Activated T-helper 1 cell treated with anti-CD3 and anti-CD28 coated beads, Interleukin-12 subunit alpha, Interleukin-12 subunit beta, Interleukin-2, Interleukin-4 antibody, amounts not matched to agents 30 ng/mL and 10 ng/mL and 1 ng/mL, durations not matched to agents 14 hours and 24 hours and 36 hours (primary cell): ENCODE measurements at regions of chr17 and their contacts with region 1.

Region 1: GRCh38 chr17:76384222-76384986 is at the start of gene SPHK1:
- DNase-seq: peak; percentile 72
- H3K4me3 Mint-ChIP-seq: peak within 1 kb of the TSS; percentile 86
- H3K27ac Mint-ChIP-seq: peak within 1 kb of the TSS; percentile 91
- H3K4me1 Mint-ChIP-seq: peaks cover 5% of the 10 kb centered on the region
- H3K27me3 Mint-ChIP-seq: peaks cover 6% of the 10 kb centered on the region
- total RNA-seq, gene SPHK1: 16.5 and 17.8 TPM in 2 replicates

Region 2: GRCh38 chr17:75909812-75910274 is 474.6 kb before region 1 on chr17:
- intact Hi-C with region 1: no loop called
- DNase-seq: no peak
- H3K4me3 Mint-ChIP-seq: no peak overlapping the region
- H3K27ac Mint-ChIP-seq: no peak overlapping the region
- H3K4me1 Mint-ChIP-seq: peaks cover 8% of the 10 kb centered on the region
- H3K27me3 Mint-ChIP-seq: no peaks in the 10 kb centered on the region

Region 3: GRCh38 chr17:76103274-76104139 is 280.9 kb before region 1 on chr17 and contains the start of gene EXOC7:
- intact Hi-C with region 1: loop called (anchors 10 kb)
- DNase-seq: peak; percentile 93
- H3K4me3 Mint-ChIP-seq: peak within 1 kb of the TSS; percentile 96
- H3K27ac Mint-ChIP-seq: peak within 1 kb of the TSS; percentile 93
- H3K4me1 Mint-ChIP-seq: peaks cover 15% of the 10 kb centered on the region
- H3K27me3 Mint-ChIP-seq: peaks cover under 1% of the 10 kb centered on the region
- total RNA-seq, gene EXOC7: 108 and 116 TPM in 2 replicates

Region 4: GRCh38 chr17:76302606-76303005 is 81.8 kb before region 1 on chr17:
- intact Hi-C with region 1: loop called (anchors 1 kb)
- DNase-seq: no peak
- H3K4me3 Mint-ChIP-seq: no peak overlapping the region
- H3K27ac Mint-ChIP-seq: no peak overlapping the region
- H3K4me1 Mint-ChIP-seq: peaks cover 5% of the 10 kb centered on the region
- H3K27me3 Mint-ChIP-seq: no peaks in the 10 kb centered on the region

Region 5: GRCh38 chr17:76337413-76337777 is 47.0 kb before region 1 on chr17:
- intact Hi-C with region 1: no loop called
- DNase-seq: no peak
- H3K4me3 Mint-ChIP-seq: no peak overlapping the region
- H3K27ac Mint-ChIP-seq: no peak overlapping the region
- H3K4me1 Mint-ChIP-seq: peaks cover 5% of the 10 kb centered on the region
- H3K27me3 Mint-ChIP-seq: no peaks in the 10 kb centered on the region

Region 6: DNA sequence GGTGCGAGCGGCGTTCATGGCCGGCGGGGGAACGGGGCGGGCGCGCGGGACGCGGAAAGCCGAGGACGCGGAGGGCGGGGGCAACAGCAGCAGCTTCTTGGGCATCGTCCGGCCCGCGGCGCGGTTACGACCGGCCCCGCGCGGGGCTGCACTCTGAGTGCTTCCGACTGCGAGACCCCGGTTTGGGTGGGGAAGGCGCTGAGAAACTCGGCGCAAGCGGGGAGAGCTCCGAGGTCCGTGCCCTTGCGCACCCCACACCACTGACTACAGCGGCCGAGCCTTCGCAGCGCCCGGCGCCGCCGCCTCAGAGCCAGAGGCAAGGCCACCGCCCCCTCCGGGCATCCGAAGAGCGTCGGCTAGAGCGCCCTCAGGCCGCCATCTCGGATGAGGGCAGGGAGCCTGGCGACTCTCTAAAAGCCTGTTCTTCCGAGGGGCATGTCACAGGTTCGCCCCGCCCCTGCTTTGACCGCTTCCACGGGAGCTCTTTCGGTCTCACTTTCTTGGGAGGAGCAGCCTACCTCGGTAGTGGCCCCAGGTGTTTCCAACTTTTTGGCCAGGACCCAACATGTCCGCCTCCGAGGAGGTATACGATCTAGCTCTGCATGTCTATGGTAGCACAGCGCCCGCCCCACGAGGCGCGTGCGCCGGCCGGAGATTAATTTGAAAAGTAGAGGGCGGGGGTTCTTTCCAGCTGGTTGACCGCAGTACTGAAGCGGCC is 30.6 kb before region 1 on chr17 and contains the start of gene PRPSAP1:
- intact Hi-C with region 1: loop called (anchors 1 kb)
- DNase-seq: peak; percentile 82
- H3K4me3 Mint-ChIP-seq: peak within 1 kb of the TSS; percentile 93
- H3K27ac Mint-ChIP-seq: peak within 1 kb of the TSS; percentile 99
- H3K4me1 Mint-ChIP-seq: peaks cover 28% of the 10 kb centered on the region
- H3K27me3 Mint-ChIP-seq: peaks cover 3% of the 10 kb centered on the region
- total RNA-seq, gene PRPSAP1: 41.2 and 44.0 TPM in 2 replicates

Region 7: DNA sequence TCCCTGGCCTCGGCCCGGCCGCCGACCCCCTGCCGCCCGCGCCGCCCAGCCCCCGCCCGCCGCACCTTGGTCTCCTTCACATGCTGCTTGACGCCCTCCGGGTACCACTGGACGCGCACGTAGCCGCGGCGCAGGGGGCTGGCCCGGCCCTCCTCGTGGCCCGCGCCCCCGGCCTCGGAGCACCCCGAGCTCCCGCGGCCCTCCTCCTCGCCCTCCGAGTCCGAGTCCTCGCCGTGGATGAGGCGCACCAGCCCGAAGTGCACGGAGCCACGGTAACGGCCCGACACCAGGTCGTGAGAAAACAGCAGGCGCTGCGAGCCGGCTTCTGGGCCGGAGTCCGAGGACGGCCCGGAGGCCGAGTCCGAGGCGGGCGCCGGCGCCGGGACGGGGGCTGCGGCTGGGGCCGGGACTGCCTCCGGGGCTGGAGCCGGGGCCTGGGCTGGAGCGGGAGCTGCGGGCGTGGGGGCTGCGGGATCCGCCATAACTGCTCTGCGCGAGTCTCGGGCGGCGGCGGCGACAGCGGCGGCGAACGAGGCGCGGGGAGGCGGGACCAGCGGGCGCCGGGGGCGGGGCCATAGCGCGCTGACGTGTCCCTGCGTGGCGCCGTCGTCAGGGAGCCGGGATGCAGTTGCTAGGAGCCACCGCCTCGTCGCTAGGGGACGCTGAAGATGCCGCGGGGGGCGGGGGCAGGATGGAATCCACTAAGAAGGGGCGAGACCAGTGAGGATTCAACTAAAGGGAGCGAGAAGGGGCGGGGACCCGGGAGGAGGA is 68.4 kb after region 1 on chr17 and contains the start of gene UBE2O:
- intact Hi-C with region 1: loop called (anchors 1 kb)
- DNase-seq: peak; percentile 93
- H3K4me3 Mint-ChIP-seq: peak within 1 kb of the TSS; percentile 91
- H3K27ac Mint-ChIP-seq: peak within 1 kb of the TSS; percentile 87
- H3K4me1 Mint-ChIP-seq: peaks cover 42% of the 10 kb centered on the region
- H3K27me3 Mint-ChIP-seq: peaks cover 10% of the 10 kb centered on the region
- total RNA-seq, gene UBE2O: 44.9 and 45.1 TPM in 2 replicates

Region 8: DNA sequence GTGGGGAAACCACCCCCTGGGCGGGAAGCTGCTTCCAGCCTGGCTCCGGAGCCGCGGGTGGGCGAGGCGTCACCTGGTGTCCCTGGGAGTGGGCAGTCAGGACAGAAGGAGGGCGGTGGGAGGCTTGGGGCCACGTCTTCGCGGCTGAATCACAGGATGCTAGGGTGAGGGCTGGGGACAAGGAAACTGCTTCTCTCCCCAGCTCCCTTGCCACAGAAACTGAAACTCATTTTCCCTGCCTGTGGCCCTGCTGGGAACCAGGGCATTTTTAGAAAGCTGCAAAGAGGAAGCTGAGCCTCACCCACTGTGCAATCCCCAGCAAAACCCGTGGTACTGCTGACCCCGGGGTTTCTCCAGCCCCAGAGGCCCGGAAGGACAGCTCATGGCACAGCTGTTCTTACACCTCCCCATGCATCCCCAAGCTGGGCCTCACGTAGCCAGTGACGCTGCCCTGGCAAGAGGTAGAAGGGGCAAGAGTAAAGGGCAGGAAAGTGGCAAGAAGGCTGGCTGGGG is 108.6 kb after region 1 on chr17:
- intact Hi-C with region 1: loop called (anchors 2 kb)
- DNase-seq: peak; percentile 61
- H3K4me3 Mint-ChIP-seq: peak overlapping the region; percentile 85
- H3K27ac Mint-ChIP-seq: peak overlapping the region; percentile 95
- H3K4me1 Mint-ChIP-seq: peaks cover 56% of the 10 kb centered on the region
- H3K27me3 Mint-ChIP-seq: no peaks in the 10 kb centered on the region